Dendritic cell treated with granulocyte-macrophage colony-stimulating factor and Interleukin-4, amounts not matched to agents 40 ng/mL and 50 ng/mL, for 4 days (primary cell): ENCODE measurements at regions of chr14 and their contacts with region 1.

Region 1: GRCh38 chr14:31291210-31291609 is 83.6 kb upstream of the HECTD1 start:
- H3K4me3 Mint-ChIP-seq: no peak overlapping the region
- H3K27ac Mint-ChIP-seq: peak overlapping the region; percentile 8
- H3K4me1 Mint-ChIP-seq: peaks cover 8% of the 10 kb centered on the region
- H3K27me3 Mint-ChIP-seq: no peaks in the 10 kb centered on the region

Region 2: GRCh38 chr14:31172084-31172483 is 119.1 kb before region 1 on chr14:
- intact Hi-C with region 1: no loop called
- H3K4me3 Mint-ChIP-seq: no peak overlapping the region
- H3K27ac Mint-ChIP-seq: no peak overlapping the region
- H3K4me1 Mint-ChIP-seq: no peaks in the 10 kb centered on the region
- H3K27me3 Mint-ChIP-seq: no peaks in the 10 kb centered on the region

Region 3: DNA sequence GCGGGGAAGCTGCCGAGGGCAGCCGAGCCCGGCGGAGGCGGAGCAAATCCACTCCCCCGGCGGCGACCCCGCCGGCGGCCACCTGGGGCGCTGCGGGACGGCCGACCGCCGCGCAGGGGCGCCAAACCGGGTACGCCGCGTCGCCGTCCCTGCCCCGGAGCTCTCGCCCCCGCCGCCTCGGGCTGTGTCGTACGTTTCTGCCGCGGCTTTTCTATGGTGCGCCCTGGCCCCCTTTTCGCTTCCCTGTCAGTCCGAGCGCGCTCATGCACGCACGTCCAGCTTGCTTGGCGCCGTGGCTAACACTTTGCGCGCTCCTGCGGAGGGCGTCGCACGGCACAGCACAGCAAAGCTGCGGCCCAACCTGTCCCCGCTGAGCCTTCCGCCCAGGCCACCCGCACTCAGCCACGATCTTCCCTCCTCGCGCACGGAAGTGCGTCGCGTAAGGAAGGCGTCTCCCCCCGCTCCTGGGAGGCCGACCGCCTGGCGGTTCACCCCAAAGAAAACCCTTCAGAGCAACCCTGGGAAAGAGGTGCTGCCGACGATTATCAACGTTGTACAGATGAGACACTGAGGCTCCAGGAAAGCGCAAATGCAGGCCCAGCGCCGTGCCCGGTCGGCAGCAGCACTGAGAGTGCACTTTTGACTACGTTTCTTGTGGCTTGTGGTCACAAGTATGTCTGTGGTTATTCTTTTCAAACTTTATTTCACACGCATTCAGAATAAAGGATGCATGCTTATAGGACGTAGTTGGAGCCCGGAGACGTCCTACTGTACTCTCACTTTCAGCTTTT is 83.3 kb before region 1 on chr14 and contains the start of gene HECTD1:
- intact Hi-C with region 1: loop called (anchors 5 kb)
- H3K4me3 Mint-ChIP-seq: peak within 1 kb of the TSS; percentile 97
- H3K27ac Mint-ChIP-seq: peak within 1 kb of the TSS; percentile 99
- H3K4me1 Mint-ChIP-seq: peaks cover 30% of the 10 kb centered on the region
- H3K27me3 Mint-ChIP-seq: no peaks in the 10 kb centered on the region

Region 4: DNA sequence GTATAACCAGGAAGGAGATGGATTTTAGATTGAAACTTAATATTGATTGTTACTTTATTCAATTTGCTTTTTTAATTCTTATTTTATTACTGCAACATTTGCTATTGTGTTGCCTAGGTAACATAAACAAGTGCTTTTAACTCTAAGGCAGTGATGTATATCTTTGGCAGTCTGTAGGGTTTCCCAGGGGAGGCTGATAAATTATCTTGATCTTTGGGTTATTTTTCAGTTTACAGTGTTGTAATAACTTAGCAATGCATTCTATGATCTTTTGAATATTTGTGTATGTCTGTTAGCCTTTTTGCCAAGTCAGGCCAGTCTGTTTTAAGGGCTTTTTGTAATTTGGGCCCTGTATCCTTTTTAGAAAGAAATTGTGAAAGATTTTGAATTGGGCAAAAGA is 173.9 kb after region 1 on chr14:
- intact Hi-C with region 1: no loop called
- H3K4me3 Mint-ChIP-seq: no peak overlapping the region
- H3K27ac Mint-ChIP-seq: no peak overlapping the region
- H3K4me1 Mint-ChIP-seq: peaks cover 7% of the 10 kb centered on the region
- H3K27me3 Mint-ChIP-seq: peaks cover 1% of the 10 kb centered on the region